Heart right ventricle (tissue), 16 donors: ENCODE measurements at regions of chr18 and their contacts with region 1.

Region 1: GRCh38 chr18:25351777-25352628 is at the start of gene ZNF521:
- DNase-seq: peak; percentile 86
- ATAC-seq: peak; percentile 75 to 93 (median 86)
- H3K4me3 ChIP-seq: peak within 1 kb of the TSS; percentile 68 to 91 (median 79)
- H3K27ac ChIP-seq: peak within 1 kb of the TSS; percentile 91 to 97 (median 94)
- H3K4me1 ChIP-seq: peaks cover 3 to 29% (median 15%) of the 10 kb centered on the region in 9 donors
- H3K27me3 ChIP-seq: peaks cover 0 to 78% (median 0%) of the 10 kb centered on the region in 7 donors
- CTCF ChIP-seq: peak in 7 of 9 donors; percentile 13 to 48 (median 31)
- total RNA-seq, gene ZNF521: 10.5 to 26.4 (median 15.9) TPM

Region 2: DNA sequence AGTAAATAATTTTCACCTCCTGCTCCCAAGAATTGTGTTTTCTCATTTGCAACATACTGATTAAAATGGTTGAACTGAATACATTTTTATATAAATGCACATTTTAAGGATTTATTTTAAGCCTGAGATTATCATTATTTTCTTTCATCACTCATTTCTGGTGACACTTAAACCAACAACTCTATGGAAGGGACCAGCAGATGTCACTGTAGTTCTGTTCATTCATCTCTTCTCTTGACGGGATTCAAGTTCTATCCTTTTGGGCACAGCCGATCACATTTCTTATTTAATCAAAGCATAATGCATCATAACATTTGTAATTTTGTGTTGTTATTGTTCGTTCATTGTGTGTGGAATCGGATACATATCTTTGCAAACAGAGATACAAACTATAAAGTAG is 473.7 kb before region 1 on chr18:
- intact Hi-C with region 1: loop called in 6 of 10 experiments (anchors 5 to 10 kb)
- DNase-seq: peak in 1 of 2 donors; percentile 39
- ATAC-seq: peak in 7 of 8 donors; percentile 59 to 77 (median 63)
- H3K4me3 ChIP-seq: no peak overlapping the region
- H3K27ac ChIP-seq: no peak overlapping the region
- H3K4me1 ChIP-seq: peaks cover 0 to 10% (median 0%) of the 10 kb centered on the region in 9 donors
- H3K27me3 ChIP-seq: peaks cover 0 to 3% (median 0%) of the 10 kb centered on the region in 7 donors
- CTCF ChIP-seq: peak; percentile 26 to 84 (median 65)

Region 3: DNA sequence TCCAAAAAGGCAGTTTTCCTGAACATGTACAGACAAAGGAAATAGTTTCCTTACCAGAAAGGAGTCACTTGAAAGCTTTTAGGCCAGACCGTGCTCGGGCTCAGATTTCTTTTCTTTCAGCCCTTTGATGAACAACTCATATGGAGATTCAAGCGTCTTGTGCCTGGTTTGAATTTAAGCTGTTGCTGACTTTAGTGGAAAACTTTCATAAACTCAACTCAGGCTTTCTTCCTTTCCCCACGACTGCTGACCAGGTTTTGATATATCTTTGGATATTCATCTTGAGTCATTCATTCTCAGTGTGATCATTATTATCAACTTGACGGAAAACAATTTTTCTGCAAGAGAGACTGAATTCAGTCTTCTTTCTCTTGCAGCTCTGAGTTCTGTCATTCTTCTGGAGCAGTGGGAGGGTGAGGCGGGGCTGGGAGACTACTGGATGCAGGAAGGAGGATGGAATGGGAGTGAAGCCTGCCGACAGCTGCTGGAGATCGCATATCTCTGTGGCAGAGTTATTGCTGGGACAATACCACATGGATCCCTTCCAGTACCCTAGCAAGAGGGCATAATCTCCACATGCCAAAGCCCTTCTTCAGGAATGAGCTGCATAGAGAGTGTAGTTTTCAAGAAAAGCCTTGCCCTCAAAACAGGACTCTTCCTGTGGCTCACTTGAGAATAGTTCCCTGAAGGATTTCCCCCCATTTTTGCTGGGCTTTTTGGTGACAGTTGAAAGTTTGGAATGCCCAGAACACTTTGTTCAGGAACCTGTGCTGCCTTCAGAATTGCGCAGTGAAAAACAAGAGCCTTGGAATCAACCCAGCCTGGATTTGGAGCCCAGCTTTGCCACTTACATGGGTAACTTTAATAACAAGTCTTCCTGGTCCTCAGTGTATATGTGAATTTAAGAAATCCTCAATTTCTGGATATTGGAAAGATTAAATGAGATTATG is 364.4 kb before region 1 on chr18:
- intact Hi-C with region 1: loop called in 2 of 10 experiments (anchors 5 to 10 kb)
- DNase-seq: peak; percentile 28 to 44
- ATAC-seq: peak; percentile 69 to 85 (median 76)
- H3K4me3 ChIP-seq: peak overlapping the region in 5 of 10 donors; percentile 13 to 32 (median 23)
- H3K27ac ChIP-seq: peak overlapping the region in 9 of 10 donors; percentile 2 to 73 (median 45)
- H3K4me1 ChIP-seq: peaks cover 3 to 33% (median 15%) of the 10 kb centered on the region in 9 donors
- H3K27me3 ChIP-seq: no peaks in the 10 kb centered on the region
- CTCF ChIP-seq: no peak

Region 4: GRCh38 chr18:25164848-25165811 is 186.9 kb before region 1 on chr18:
- intact Hi-C with region 1: loop called in 4 of 10 experiments (anchors 2 to 10 kb)
- DNase-seq: no peak
- ATAC-seq: peak; percentile 52 to 84 (median 79)
- H3K4me3 ChIP-seq: peak overlapping the region in 9 of 10 donors; percentile 19 to 55 (median 48)
- H3K27ac ChIP-seq: peak overlapping the region in 7 of 10 donors; percentile 28 to 58 (median 42)
- H3K4me1 ChIP-seq: peaks cover 5 to 28% (median 19%) of the 10 kb centered on the region in 9 donors
- H3K27me3 ChIP-seq: no peaks in the 10 kb centered on the region
- CTCF ChIP-seq: peak in 1 of 9 donors; percentile 19

Region 5: GRCh38 chr18:25223211-25223610 is 128.8 kb before region 1 on chr18:
- intact Hi-C with region 1: no loop called
- DNase-seq: no peak
- ATAC-seq: no peak
- H3K4me3 ChIP-seq: no peak overlapping the region
- H3K27ac ChIP-seq: peak overlapping the region in 2 of 10 donors; percentile 41 to 50
- H3K4me1 ChIP-seq: peaks cover 0 to 24% (median 3%) of the 10 kb centered on the region in 9 donors
- H3K27me3 ChIP-seq: no peaks in the 10 kb centered on the region
- CTCF ChIP-seq: no peak

Region 6: DNA sequence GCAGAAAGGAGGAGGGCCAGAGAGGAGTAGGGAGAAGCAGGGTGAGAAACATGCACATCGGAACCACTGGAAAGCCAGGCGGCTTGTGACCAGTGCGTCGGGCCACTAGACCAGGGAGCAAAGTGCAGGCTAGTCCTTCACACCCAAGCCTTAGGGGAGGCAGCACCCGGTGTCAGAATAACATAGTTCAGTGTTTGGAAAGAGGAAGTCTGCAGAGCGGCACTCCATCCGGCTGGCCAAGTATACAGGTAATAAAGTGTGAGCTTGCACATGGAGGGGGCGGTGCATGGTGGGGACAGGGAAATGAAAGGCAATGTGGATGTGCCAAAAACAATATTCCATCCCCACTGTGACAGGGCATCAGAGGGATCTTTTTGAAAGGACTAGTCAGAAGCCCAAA is 69.7 kb before region 1 on chr18:
- intact Hi-C with region 1: loop called in 6 of 10 experiments (anchors 2 to 10 kb)
- DNase-seq: peak in 1 of 2 donors; percentile 20
- ATAC-seq: peak in 5 of 8 donors; percentile 21 to 36 (median 25)
- H3K4me3 ChIP-seq: no peak overlapping the region
- H3K27ac ChIP-seq: peak overlapping the region in 7 of 10 donors; percentile 26 to 91 (median 78)
- H3K4me1 ChIP-seq: peaks cover 8 to 87% (median 65%) of the 10 kb centered on the region in 9 donors
- H3K27me3 ChIP-seq: no peaks in the 10 kb centered on the region
- CTCF ChIP-seq: no peak

Region 7: DNA sequence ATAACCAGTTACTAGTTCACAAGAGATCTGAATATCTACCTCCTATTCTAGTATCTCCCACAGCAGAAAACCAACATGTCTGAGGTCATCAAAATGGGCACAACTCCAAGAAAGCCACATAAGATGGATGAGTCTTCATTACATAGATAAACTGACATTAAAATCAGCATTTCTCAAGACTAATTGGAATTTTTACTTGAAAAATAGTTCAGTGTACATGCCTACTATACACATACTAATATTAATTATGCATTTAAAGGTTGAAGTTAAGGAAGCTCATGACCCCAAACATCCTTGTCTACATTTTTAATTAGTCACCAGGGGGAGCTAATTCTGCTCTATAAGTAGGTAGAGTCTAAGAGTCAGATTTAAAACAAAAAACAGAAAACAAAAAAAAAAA is 42.0 kb before region 1 on chr18:
- intact Hi-C with region 1: loop called in 1 of 10 experiments (anchors 5 kb)
- DNase-seq: no peak
- ATAC-seq: no peak
- H3K4me3 ChIP-seq: no peak overlapping the region
- H3K27ac ChIP-seq: no peak overlapping the region
- H3K4me1 ChIP-seq: peaks cover 0 to 12% (median 6%) of the 10 kb centered on the region in 9 donors
- H3K27me3 ChIP-seq: no peaks in the 10 kb centered on the region
- CTCF ChIP-seq: peak in 5 of 9 donors; percentile 29 to 53 (median 35)

Region 8: GRCh38 chr18:25832001-25832604 is 480.1 kb after region 1 on chr18:
- intact Hi-C with region 1: loop called in 3 of 10 experiments (anchors 10 kb)
- DNase-seq: peak; percentile 59 to 67
- ATAC-seq: peak; percentile 80 to 93 (median 89)
- H3K4me3 ChIP-seq: no peak overlapping the region
- H3K27ac ChIP-seq: no peak overlapping the region
- H3K4me1 ChIP-seq: peaks cover 0 to 18% (median 6%) of the 10 kb centered on the region in 9 donors
- H3K27me3 ChIP-seq: no peaks in the 10 kb centered on the region
- CTCF ChIP-seq: peak; percentile 57 to 83 (median 78)

Region 9: GRCh38 chr18:27109451-27109850 is 1757.4 kb after region 1 on chr18:
- intact Hi-C with region 1: no loop called
- DNase-seq: peak in 1 of 2 donors; percentile 6
- ATAC-seq: peak in 4 of 8 donors; percentile 40 to 75 (median 62)
- H3K4me3 ChIP-seq: no peak overlapping the region
- H3K27ac ChIP-seq: no peak overlapping the region
- H3K4me1 ChIP-seq: no peaks in the 10 kb centered on the region
- H3K27me3 ChIP-seq: no peaks in the 10 kb centered on the region
- CTCF ChIP-seq: no peak